ENCODE measurements at regions of chr1 and their contacts with region 1.

Region 1: DNA sequence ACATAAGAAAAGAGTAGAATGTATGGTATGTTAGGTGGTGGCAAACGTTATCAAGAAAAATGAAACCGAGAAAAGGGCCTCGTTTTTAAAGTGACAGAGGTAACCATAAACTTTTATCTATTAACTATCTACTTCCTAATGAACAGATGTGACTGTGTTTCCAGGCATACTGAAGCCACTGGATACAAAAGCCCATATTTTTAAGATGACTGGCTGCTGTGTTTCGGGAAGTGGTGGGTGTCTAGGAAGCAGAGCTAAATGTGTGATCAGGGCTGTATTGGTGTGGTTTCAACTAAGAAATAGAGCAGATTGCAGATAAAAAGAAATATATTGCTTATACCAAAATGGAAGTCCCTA is 71.8 kb downstream of the CHRM3 start:
- DNase-seq: peak; percentile 74 to 97 (median 94)
- H3K4me3 ChIP-seq: peak overlapping the region in 6 of 7 experiments; percentile 36 to 71 (median 58)
- H3K27ac ChIP-seq: peak overlapping the region; percentile 89 to 93
- H3K4me1 ChIP-seq: peaks cover 6 to 63% (median 23%) of the 10 kb centered on the region in 4 experiments
- H3K27me3 ChIP-seq: no peaks in the 10 kb centered on the region

Region 2: GRCh38 chr1:239437822-239438221 is 20.3 kb before region 1 on chr1:
- CTCF ChIA-PET with region 1: interaction called, 13 read pairs
- POLR2A ChIA-PET with region 1: no interaction called
- DNase-seq: peak in 1 of 3 donors; percentile 62
- H3K4me3 ChIP-seq: no peak overlapping the region
- H3K27ac ChIP-seq: no peak overlapping the region
- H3K4me1 ChIP-seq: peaks cover 0 to 26% (median 5%) of the 10 kb centered on the region in 4 experiments
- H3K27me3 ChIP-seq: no peaks in the 10 kb centered on the region

Region 3: DNA sequence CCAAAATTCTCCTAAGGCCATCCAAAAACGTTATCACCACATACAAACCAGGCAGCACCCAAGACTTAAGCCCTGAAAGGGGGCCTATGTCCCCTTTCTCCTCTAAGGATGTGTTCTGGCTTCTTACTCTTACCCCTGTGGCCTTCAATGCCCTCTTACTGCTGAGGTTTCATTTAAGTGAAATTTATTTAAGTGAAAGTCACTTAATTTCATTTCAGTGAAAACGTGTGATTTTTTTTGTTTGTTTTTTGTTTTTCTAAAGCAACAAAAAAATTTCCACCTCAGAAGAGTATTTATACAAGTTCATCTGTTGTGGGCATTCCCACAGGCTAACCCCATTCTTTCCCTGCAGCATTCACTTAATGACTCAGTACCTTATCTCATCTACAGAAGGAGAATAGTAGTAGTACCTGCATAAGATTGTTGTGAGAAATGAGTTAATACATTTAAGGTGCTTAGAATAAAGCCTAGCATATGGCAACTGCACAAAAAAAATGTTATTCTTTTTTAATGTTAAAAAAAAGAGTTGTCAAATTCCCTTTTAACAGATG is 148.8 kb after region 1 on chr1:
- CTCF ChIA-PET with region 1: no interaction called
- POLR2A ChIA-PET with region 1: no interaction called
- DNase-seq: peak in 1 of 3 donors; percentile 46
- H3K4me3 ChIP-seq: no peak overlapping the region
- H3K27ac ChIP-seq: no peak overlapping the region
- H3K4me1 ChIP-seq: no peaks in the 10 kb centered on the region
- H3K27me3 ChIP-seq: no peaks in the 10 kb centered on the region